Lower lobe of right lung (tissue), 2 donors: ENCODE measurements at regions of chr17 and their contacts with region 1.

Region 1: GRCh38 chr17:68961214-68961882 is 6.2 kb upstream of the ABCA8 start:
- DNase-seq: no peak
- ATAC-seq: peak in 1 of 2 donors; percentile 21
- H3K4me3 ChIP-seq: no peak overlapping the region
- H3K27ac ChIP-seq: no peak overlapping the region
- H3K4me1 ChIP-seq: no peaks in the 10 kb centered on the region
- H3K27me3 ChIP-seq: no peaks in the 10 kb centered on the region
- CTCF ChIP-seq: no peak

Region 2: DNA sequence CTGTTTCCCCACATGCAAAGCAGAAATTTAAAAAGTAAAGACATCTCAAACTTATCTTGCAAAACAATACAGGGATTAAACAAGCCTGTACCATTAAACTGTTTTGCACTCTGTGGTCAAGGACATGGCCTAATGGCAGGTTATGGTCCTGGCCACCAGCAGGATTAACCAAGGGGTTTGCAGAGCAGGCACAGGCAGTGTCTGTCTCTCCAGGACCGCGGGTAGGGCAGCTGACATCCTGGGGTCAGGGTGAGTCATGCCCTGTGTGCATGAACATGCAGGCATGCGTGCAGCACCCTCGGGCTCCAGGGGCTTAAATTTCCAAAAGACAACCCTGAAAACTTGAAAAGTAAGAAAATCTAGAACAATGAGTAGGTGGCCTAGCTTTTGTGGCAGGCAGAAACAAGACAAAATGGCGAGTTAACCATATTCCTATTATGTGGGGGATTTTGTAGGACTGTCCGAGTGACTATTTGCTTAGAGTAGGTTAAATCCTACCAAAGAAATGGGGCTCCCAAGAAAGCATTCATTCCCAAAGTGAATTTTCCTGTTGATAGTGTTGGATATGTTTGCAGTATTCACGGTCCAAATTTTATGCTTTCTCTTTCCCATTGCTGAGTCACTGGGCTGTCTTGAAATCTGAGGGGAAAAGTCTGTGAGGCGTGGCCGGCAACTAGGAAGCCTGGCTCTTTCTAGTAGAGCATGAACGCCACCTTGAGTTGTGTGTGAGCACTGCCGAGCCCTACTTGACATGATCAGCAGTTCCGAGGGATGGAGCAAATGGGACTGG is 201.8 kb before region 1 on chr17:
- intact Hi-C with region 1: loop called (anchors 10 kb)
- DNase-seq: peak; percentile 91
- ATAC-seq: peak; percentile 98 to 99
- H3K4me3 ChIP-seq: peak overlapping the region; percentile 46
- H3K27ac ChIP-seq: peak overlapping the region; percentile 83
- H3K4me1 ChIP-seq: peaks cover 9% of the 10 kb centered on the region
- H3K27me3 ChIP-seq: no peaks in the 10 kb centered on the region
- CTCF ChIP-seq: peak; percentile 82

Region 3: DNA sequence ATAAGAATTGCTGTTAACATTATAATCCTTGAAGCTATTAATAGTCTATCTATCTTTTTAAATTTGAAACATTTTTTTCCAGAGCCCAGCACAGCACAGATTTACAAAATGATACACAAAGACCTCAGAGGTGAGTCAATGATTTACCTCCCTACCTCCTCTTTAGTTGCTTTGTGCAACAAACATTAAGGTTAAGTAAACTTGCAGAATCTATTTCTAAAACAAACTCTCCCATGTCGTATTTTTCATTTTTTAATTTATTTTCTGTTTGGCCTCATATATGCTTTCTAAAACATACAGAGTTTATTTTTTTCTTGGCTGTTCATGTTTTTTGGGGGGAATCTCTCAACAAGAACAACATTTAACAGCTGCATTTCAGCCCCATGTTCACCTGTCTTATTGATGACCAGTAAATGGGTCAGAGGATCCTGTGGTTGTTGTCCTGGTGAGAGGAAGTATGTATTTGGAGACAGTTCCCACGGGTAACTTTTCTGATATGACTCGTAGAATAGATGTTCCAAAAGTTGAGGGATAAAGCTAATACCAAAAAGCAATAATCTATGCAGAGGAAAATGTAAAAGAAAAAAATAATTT is 56.8 kb after region 1 on chr17:
- intact Hi-C with region 1: no loop called
- DNase-seq: no peak
- ATAC-seq: no peak
- H3K4me3 ChIP-seq: no peak overlapping the region
- H3K27ac ChIP-seq: no peak overlapping the region
- H3K4me1 ChIP-seq: no peaks in the 10 kb centered on the region
- H3K27me3 ChIP-seq: no peaks in the 10 kb centered on the region
- CTCF ChIP-seq: no peak